Activated CD4-positive, alpha-beta memory T cell treated with anti-CD3 and anti-CD28 coated beads for 36 hours (primary cell): ENCODE measurements at regions of chr20 and their contacts with region 1.

Region 1: DNA sequence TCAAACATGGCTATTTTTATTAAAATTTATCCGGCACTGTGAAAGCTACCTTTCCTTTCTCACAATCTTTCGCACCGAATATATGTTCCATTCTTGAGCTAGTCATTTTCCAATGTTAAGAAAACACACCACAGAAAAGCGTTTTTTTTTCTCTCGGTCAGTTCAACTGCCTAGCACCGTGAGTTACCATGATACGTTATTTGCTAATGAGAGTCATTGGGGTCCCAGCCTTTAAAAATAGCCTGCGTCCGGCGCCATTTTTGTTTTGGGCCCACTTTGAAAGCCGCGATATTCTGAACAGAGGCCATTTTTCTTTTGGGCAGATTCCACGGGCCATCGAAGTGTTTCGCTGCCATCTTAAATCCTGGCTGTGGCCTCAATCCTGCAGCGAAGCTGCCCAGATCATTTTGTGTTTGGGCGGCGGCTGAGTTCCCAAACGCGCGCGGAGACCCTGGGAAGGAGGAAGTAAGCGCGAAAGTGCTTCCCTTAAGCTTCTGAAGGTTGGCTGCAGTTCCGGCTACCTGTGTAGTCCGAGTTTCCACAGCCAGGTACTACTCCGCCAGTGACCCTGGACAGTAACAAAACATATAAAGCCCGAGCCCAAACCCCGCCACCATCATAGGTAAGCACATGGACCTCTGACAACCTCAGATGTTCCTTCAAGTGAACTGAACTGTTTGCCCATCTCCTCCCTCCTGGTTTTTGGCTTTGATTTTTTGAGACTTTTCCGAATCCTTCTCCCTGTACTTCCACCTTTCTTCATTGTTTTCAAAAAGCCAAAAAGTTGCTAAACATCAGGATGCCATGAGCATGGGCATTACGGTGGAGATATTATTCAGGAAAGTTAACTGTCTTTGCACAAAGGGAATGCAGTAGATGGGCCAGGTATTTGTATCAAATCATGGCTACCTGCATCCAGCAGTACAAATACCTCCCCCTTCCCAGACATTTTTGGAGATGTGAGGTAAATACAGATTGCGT is at the start of gene SLX4IP:
- DNase-seq: peak; percentile 89
- H3K4me3 Mint-ChIP-seq: peak within 1 kb of the TSS; percentile 90
- H3K27ac Mint-ChIP-seq: peak within 1 kb of the TSS; percentile 96
- H3K4me1 Mint-ChIP-seq: peaks cover 50% of the 10 kb centered on the region
- H3K27me3 Mint-ChIP-seq: no peaks in the 10 kb centered on the region
- total RNA-seq, gene SLX4IP: 5.5 to 6.3 TPM

Region 2: DNA sequence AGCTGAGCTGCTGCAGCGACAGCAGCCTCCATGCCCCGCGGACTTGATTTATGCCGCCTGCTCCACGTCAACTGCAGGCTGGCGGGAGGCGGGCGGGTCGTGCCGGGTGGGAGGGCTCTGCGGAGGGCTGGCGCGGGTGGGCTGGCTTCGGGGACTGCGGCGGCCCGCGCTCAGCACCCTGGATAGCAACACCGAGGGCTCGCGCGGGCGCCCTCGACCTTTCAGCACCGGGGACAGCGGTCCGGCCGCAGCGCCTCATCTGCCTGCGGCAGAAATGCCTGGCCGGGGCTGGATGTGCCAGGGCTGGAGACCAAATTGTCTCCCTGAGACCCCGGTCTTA is 215.7 kb before region 1 on chr20:
- CTCF ChIA-PET with region 1: no interaction called
- POLR2A ChIA-PET with region 1: no interaction called
- intact Hi-C with region 1: loop called (anchors 1 kb)
- DNase-seq: peak; percentile 69
- H3K4me3 Mint-ChIP-seq: no peak overlapping the region
- H3K27ac Mint-ChIP-seq: no peak overlapping the region
- H3K4me1 Mint-ChIP-seq: peaks cover 15% of the 10 kb centered on the region
- H3K27me3 Mint-ChIP-seq: peaks cover 45% of the 10 kb centered on the region

Region 3: DNA sequence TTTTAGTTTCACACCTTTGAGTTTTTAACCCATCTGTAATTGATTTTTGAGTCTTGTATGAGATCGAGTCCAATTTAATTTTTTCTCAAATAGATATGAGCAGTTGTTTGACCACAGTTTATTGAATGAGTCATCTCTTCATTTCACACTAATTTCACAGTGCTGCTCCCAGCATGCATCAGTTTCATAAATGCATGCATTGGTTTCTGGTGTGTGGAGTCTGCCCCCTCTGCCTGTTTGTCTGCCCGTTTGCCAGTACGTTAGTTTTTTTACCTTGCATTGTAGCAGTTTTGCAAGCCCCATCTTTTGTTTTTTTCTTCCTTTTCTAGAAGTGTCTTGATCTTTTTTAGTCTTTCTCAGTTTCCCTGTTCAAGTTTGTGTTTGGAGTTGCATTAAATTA is 11.9 kb after region 1 on chr20:
- CTCF ChIA-PET with region 1: interaction called, 3 read pairs
- POLR2A ChIA-PET with region 1: interaction called, 5 read pairs
- intact Hi-C with region 1: loop called (anchors 1 kb)
- DNase-seq: peak; percentile 71
- H3K4me3 Mint-ChIP-seq: peak overlapping the region; percentile 65
- H3K27ac Mint-ChIP-seq: peak overlapping the region; percentile 65
- H3K4me1 Mint-ChIP-seq: peaks cover 20% of the 10 kb centered on the region
- H3K27me3 Mint-ChIP-seq: no peaks in the 10 kb centered on the region

Region 4: DNA sequence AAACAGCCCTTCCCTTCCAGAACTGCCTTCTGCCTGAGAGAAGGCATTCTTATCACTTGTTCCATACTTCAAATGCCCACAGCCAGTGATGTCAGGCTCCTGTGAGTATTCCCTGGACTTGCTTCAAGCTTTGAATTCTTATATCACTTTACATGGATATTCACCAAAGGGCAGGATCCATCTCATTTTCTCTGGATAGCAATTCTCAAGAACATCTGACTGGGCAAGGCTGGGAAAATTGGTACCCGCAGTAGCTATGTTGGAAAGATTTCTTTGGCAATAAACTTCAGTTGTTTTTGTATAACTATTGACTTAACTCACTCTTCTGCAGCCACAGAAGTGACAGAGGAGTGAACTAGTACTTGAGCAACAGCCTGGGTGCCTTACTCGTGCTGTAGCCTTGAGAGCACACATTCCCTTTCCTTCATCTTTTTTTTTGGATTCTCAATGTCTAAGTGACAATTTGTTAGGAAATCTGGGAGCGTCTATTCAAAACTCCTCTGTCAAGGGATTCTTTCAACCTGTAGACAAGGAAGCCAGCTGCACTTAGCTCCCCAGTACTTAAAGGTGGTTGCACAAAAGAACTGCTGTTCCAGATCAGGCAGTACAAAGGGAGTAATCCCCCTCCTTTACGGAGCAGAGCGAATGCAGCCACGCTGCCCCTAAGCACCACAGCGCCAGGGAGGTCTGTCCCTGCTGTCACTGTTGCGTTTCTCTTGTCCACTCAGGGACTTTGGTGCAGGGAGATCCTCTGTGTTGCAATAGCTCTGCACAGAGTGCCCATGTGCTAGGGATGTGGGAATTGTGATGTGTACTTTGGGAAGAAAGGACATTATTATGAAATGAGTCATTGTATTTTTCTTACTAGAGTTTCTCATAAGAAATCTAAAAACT is 169.1 kb after region 1 on chr20:
- CTCF ChIA-PET with region 1: interaction called, 3 read pairs
- POLR2A ChIA-PET with region 1: interaction called, 5 read pairs
- intact Hi-C with region 1: loop called (anchors 1 kb)
- DNase-seq: no peak
- H3K4me3 Mint-ChIP-seq: no peak overlapping the region
- H3K27ac Mint-ChIP-seq: no peak overlapping the region
- H3K4me1 Mint-ChIP-seq: peaks cover 11% of the 10 kb centered on the region
- H3K27me3 Mint-ChIP-seq: no peaks in the 10 kb centered on the region